ENCODE measurements at regions of chr3 and their contacts with region 1.

Region 1: GRCh38 chr3:10026084-10026890 is at the start of gene FANCD2:
- DNase-seq: peak; percentile 82 to 97 (median 91)
- ATAC-seq: peak; percentile 91
- H3K4me3 ChIP-seq: peak within 1 kb of the TSS; percentile 87
- H3K4me3 Mint-ChIP-seq: peak within 1 kb of the TSS; percentile 98
- H3K27ac ChIP-seq: peak within 1 kb of the TSS; percentile 70 to 84
- H3K27ac Mint-ChIP-seq: peak within 1 kb of the TSS; percentile 98
- H3K4me1 ChIP-seq: peaks cover 33% of the 10 kb centered on the region
- H3K4me1 Mint-ChIP-seq: peaks cover 35% of the 10 kb centered on the region
- H3K27me3 ChIP-seq: no peaks in the 10 kb centered on the region
- H3K27me3 Mint-ChIP-seq: no peaks in the 10 kb centered on the region
- CTCF ChIP-seq: no peak
- total RNA-seq, gene FANCD2: 13.8 to 16.8 TPM

Region 2: GRCh38 chr3:9649791-9650521 is 376.3 kb before region 1 on chr3:
- CTCF ChIA-PET with region 1: no interaction called
- POLR2A ChIA-PET with region 1: no interaction called
- intact Hi-C with region 1: loop called in 1 of 2 experiments (anchors 5 kb)
- DNase-seq: peak in 3 of 14 experiments; percentile 40 to 57 (median 53)
- ATAC-seq: no peak
- H3K4me3 ChIP-seq: peak overlapping the region; percentile 92
- H3K4me3 Mint-ChIP-seq: peak overlapping the region; percentile 96
- H3K27ac ChIP-seq: peak overlapping the region; percentile 78 to 92
- H3K27ac Mint-ChIP-seq: peak overlapping the region; percentile 87
- H3K4me1 ChIP-seq: peaks cover 36% of the 10 kb centered on the region
- H3K4me1 Mint-ChIP-seq: peaks cover 35% of the 10 kb centered on the region
- H3K27me3 ChIP-seq: no peaks in the 10 kb centered on the region
- H3K27me3 Mint-ChIP-seq: no peaks in the 10 kb centered on the region
- CTCF ChIP-seq: no peak

Region 3: GRCh38 chr3:9884555-9885165 is 141.6 kb before region 1 on chr3:
- CTCF ChIA-PET with region 1: no interaction called
- POLR2A ChIA-PET with region 1: no interaction called
- intact Hi-C with region 1: loop called in 1 of 2 experiments (anchors 5 kb)
- DNase-seq: no peak
- ATAC-seq: no peak
- H3K4me3 ChIP-seq: no peak overlapping the region
- H3K4me3 Mint-ChIP-seq: no peak overlapping the region
- H3K27ac ChIP-seq: no peak overlapping the region
- H3K27ac Mint-ChIP-seq: no peak overlapping the region
- H3K4me1 ChIP-seq: no peaks in the 10 kb centered on the region
- H3K4me1 Mint-ChIP-seq: no peaks in the 10 kb centered on the region
- H3K27me3 ChIP-seq: no peaks in the 10 kb centered on the region
- H3K27me3 Mint-ChIP-seq: no peaks in the 10 kb centered on the region
- CTCF ChIP-seq: no peak

Region 4: GRCh38 chr3:9986237-9986725 is 40.0 kb before region 1 on chr3:
- CTCF ChIA-PET with region 1: no interaction called
- POLR2A ChIA-PET with region 1: interaction called, 17 read pairs
- intact Hi-C with region 1: loop called (anchors 2 kb)
- DNase-seq: no peak
- ATAC-seq: peak; percentile 44
- H3K4me3 ChIP-seq: peak overlapping the region; percentile 99
- H3K4me3 Mint-ChIP-seq: peak overlapping the region; percentile 96
- H3K27ac ChIP-seq: peak overlapping the region; percentile 75 to 94
- H3K27ac Mint-ChIP-seq: peak overlapping the region; percentile 98
- H3K4me1 ChIP-seq: peaks cover 27% of the 10 kb centered on the region
- H3K4me1 Mint-ChIP-seq: peaks cover 27% of the 10 kb centered on the region
- H3K27me3 ChIP-seq: no peaks in the 10 kb centered on the region
- H3K27me3 Mint-ChIP-seq: no peaks in the 10 kb centered on the region
- CTCF ChIP-seq: no peak

Region 5: DNA sequence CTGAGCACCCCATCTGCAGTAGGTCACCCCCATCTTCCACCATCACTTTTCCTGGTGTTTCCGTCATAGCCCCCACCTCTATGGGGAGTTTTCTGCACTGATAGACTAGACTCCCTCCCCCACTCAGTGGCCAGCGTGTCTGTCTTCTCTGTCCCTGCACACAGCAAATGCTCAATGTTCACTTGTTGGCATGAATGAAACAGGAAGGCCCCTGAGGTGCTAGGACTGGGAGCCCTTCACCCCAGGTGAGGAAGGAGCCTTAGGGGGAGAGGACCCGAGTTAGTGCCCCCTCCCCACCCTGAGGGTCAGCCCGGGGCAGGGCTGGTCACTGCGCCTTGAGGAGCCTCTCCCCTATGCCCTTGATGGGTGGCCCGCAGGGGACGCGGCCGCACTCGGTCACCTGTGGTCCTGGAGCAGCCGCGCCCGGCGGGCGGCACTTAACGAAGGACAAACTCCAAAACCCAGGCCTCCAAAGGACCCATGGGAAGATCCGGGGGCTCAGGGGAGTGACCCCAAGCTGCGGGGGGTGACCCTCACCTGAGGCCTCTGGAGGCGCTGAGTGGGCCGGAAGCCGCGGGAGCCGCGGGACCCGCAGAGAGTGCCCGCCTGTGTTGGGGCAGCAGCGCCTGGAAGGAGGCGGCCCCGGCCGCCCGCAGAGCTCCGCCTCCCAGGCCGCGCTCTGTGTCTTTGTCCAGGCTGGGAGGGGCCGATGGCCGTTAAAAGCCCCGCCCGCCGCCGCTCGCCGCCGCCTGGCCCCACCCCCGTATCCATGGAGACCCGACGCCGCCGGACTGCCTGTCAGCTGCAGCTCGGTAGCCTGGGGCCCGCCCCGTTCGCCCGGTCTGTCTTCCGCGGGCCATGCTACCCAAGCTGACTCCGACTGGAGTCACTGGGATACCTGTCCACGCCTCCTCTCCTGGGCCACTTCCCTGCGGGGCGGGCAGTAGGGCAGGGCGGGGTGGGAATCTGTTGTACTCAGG is 15.5 kb before region 1 on chr3:
- CTCF ChIA-PET with region 1: no interaction called
- POLR2A ChIA-PET with region 1: interaction called, 10 read pairs
- intact Hi-C with region 1: no loop called
- DNase-seq: peak; percentile 46 to 88 (median 68)
- ATAC-seq: peak; percentile 51
- H3K4me3 ChIP-seq: peak overlapping the region; percentile 58
- H3K4me3 Mint-ChIP-seq: peak overlapping the region; percentile 45
- H3K27ac ChIP-seq: no peak overlapping the region
- H3K27ac Mint-ChIP-seq: no peak overlapping the region
- H3K4me1 ChIP-seq: peaks cover 31% of the 10 kb centered on the region
- H3K4me1 Mint-ChIP-seq: peaks cover 23% of the 10 kb centered on the region
- H3K27me3 ChIP-seq: peaks cover 5 to 8% of the 10 kb centered on the region in 2 experiments
- H3K27me3 Mint-ChIP-seq: peaks cover 20% of the 10 kb centered on the region
- CTCF ChIP-seq: no peak

Region 6: DNA sequence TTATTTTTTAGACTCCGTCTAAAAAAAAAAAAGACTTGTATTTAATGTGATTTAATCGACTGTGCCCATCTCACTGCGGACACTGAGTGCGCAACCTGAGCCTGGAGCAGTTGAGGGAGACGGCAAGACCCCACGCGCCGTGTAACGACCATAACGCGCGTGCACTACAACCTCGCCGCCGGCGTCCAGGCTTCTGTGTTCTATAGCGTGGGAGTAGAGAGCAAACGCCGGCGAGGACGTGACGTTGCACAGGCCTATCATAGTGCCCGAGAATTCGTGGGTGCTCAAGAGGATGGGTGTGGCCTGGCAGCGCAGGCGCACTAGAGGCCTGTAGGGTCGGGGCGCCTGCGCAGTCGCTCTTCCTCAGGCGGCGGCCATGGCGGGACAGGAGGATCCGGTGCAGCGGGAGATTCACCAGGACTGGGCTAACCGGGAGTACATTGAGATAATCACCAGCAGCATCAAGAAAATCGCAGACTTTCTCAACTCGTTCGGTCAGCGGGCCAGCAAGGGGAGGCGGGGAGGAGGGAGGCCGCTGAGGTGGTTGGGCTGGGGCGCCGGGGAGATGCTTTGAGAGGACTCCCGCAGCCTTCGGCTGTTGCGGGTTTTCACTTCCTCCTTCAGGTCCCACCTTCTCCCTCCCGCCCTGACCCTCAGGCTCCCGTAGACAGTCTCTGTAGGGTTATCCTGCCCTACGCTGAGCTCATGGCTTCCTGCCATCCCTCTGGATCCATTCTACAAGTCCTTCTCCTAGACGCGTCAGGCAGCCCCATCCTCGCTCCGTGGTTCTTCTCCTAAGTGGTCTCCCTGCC is 89.2 kb after region 1 on chr3 and contains the start of gene BRK1:
- CTCF ChIA-PET with region 1: no interaction called
- POLR2A ChIA-PET with region 1: no interaction called
- intact Hi-C with region 1: loop called (anchors 2 kb)
- DNase-seq: peak; percentile 83 to 98 (median 92)
- ATAC-seq: peak; percentile 97
- H3K4me3 ChIP-seq: peak within 1 kb of the TSS; percentile 98
- H3K4me3 Mint-ChIP-seq: peak within 1 kb of the TSS; percentile 95
- H3K27ac ChIP-seq: peak within 1 kb of the TSS; percentile 64 to 74
- H3K27ac Mint-ChIP-seq: peak within 1 kb of the TSS; percentile 88
- H3K4me1 ChIP-seq: peaks cover 41% of the 10 kb centered on the region
- H3K4me1 Mint-ChIP-seq: peaks cover 36% of the 10 kb centered on the region
- H3K27me3 ChIP-seq: no peaks in the 10 kb centered on the region
- H3K27me3 Mint-ChIP-seq: no peaks in the 10 kb centered on the region
- CTCF ChIP-seq: no peak
- total RNA-seq, gene BRK1: 33.1 to 33.8 TPM

Region 7: GRCh38 chr3:10627885-10628572 is 601.7 kb after region 1 on chr3:
- CTCF ChIA-PET with region 1: no interaction called
- POLR2A ChIA-PET with region 1: no interaction called
- intact Hi-C with region 1: no loop called
- DNase-seq: no peak
- ATAC-seq: no peak
- H3K4me3 ChIP-seq: no peak overlapping the region
- H3K4me3 Mint-ChIP-seq: no peak overlapping the region
- H3K27ac ChIP-seq: no peak overlapping the region
- H3K27ac Mint-ChIP-seq: no peak overlapping the region
- H3K4me1 ChIP-seq: no peaks in the 10 kb centered on the region
- H3K4me1 Mint-ChIP-seq: no peaks in the 10 kb centered on the region
- H3K27me3 ChIP-seq: no peaks in the 10 kb centered on the region
- H3K27me3 Mint-ChIP-seq: peaks cover under 1% of the 10 kb centered on the region
- CTCF ChIP-seq: no peak